ENCODE measurements at regions of chr6 and their contacts with region 1.

Region 1: DNA sequence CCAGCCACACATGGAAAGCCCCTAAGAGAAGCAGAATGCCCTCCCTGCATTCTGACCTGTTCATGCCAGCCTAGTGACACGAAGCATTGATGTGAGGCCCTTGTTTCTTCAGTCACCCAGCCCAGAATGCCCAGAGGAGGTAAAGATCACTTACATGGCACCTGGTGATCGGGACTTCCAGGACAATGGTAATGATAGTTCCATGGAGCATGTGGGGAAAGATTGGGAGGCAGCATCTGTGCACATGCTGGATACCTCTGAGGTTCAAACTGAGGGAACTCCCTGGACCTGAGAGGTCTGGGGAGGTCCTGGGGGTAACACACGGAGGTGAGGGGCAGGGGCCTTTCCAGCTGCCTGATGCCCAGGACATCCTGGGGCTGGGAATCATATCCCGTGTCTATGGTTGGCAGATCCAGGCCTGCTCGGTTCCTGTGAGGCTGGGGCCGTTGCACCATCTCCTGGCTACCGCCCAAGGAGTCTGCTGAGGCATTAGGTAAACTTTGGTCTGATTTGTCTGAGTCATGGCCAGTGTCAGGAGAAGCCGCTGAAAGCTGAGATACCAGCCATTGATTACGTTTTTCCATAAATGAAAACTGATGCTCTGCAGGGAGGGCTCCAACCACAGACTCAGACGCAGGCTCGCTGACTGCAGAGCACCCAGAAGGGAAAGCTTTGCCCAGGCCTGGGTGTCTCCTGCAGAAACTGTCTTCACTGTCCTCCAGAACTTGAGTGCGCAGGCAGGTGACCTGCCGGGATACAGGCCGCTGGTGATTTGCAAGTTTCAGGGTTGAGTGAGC is 14.4 kb downstream of the TRAF3IP2 start:
- DNase-seq: peak; percentile 99
- H3K4me3 ChIP-seq: peak overlapping the region in 1 of 3 experiments; percentile 11
- H3K27ac ChIP-seq: peak overlapping the region; percentile 87
- H3K4me1 ChIP-seq: peaks cover 66% of the 10 kb centered on the region
- H3K27me3 ChIP-seq: no peaks in the 10 kb centered on the region
- CTCF ChIP-seq: no peak

Region 2: GRCh38 chr6:111439171-111439570 is 152.1 kb before region 1 on chr6:
- CTCF ChIA-PET with region 1: no interaction called
- dilution Hi-C with region 1: no loop called
- in situ Hi-C with region 1: no loop called
- intact Hi-C with region 1: no loop called
- DNase-seq: no peak
- H3K4me3 ChIP-seq: no peak overlapping the region
- H3K27ac ChIP-seq: no peak overlapping the region
- H3K4me1 ChIP-seq: no peaks in the 10 kb centered on the region
- H3K27me3 ChIP-seq: no peaks in the 10 kb centered on the region
- CTCF ChIP-seq: no peak

Region 3: GRCh38 chr6:111503207-111503606 is 88.1 kb before region 1 on chr6:
- CTCF ChIA-PET with region 1: no interaction called
- dilution Hi-C with region 1: loop called (anchors 5 kb)
- in situ Hi-C with region 1: no loop called
- intact Hi-C with region 1: no loop called
- DNase-seq: no peak
- H3K4me3 ChIP-seq: no peak overlapping the region
- H3K27ac ChIP-seq: no peak overlapping the region
- H3K4me1 ChIP-seq: no peaks in the 10 kb centered on the region
- H3K27me3 ChIP-seq: no peaks in the 10 kb centered on the region
- CTCF ChIP-seq: no peak

Region 4: DNA sequence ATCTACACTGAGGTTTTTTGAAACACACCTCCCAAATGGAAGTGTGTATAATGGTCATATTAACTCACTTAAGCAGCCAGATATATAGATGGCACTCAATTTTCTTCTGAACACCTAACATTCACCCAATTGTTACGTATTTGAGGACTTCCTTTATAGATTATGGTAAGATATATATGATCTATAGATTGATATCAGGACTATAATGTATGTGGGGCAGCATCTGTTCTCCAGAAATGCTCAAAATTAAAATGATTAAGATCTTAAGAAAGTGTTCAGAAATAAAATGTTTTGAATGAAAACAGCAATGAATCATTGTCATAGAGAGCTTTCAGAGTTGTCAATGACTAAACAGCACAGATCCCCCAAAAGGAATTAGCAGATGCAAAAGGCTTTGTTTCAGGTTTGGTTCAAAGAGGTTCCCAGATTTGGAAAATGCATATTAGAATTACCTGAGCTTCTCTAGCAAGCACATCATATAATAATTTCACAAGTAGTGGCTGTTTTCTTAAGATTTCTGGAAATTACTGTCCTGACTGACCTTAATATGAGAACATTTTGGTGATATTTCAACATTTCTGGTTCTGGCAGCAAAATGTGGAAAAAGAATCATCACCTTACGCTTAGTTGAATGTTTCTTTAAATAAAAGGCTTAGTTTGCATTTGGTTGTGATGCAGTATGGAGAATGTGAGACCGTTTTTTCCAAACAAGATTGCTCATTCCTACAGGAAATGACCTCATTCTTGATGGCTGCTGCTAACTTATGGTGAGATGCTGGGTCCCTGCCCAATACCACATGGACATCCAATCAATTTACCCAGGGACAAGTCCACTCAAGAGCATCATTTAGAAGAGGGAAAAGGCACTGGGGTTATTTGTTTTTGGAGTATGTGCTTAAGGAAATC is 17.2 kb before region 1 on chr6:
- CTCF ChIA-PET with region 1: no interaction called
- dilution Hi-C with region 1: no loop called
- in situ Hi-C with region 1: no loop called
- intact Hi-C with region 1: loop called (anchors 2 kb)
- DNase-seq: peak; percentile 80
- H3K4me3 ChIP-seq: no peak overlapping the region
- H3K27ac ChIP-seq: peak overlapping the region; percentile 66
- H3K4me1 ChIP-seq: peaks cover 36% of the 10 kb centered on the region
- H3K27me3 ChIP-seq: no peaks in the 10 kb centered on the region
- CTCF ChIP-seq: no peak

Region 5: GRCh38 chr6:111605100-111605751 is 13.9 kb after region 1 on chr6:
- CTCF ChIA-PET with region 1: no interaction called
- dilution Hi-C with region 1: no loop called
- in situ Hi-C with region 1: no loop called
- intact Hi-C with region 1: loop called (anchors 1 kb)
- DNase-seq: peak; percentile 54
- H3K4me3 ChIP-seq: peak overlapping the region; percentile 61 to 85 (median 83)
- H3K27ac ChIP-seq: peak overlapping the region; percentile 97
- H3K4me1 ChIP-seq: peaks cover 41% of the 10 kb centered on the region
- H3K27me3 ChIP-seq: no peaks in the 10 kb centered on the region
- CTCF ChIP-seq: no peak